Natural killer cell (primary cell): ENCODE measurements at regions of chr10 and their contacts with region 1.

Region 1: DNA sequence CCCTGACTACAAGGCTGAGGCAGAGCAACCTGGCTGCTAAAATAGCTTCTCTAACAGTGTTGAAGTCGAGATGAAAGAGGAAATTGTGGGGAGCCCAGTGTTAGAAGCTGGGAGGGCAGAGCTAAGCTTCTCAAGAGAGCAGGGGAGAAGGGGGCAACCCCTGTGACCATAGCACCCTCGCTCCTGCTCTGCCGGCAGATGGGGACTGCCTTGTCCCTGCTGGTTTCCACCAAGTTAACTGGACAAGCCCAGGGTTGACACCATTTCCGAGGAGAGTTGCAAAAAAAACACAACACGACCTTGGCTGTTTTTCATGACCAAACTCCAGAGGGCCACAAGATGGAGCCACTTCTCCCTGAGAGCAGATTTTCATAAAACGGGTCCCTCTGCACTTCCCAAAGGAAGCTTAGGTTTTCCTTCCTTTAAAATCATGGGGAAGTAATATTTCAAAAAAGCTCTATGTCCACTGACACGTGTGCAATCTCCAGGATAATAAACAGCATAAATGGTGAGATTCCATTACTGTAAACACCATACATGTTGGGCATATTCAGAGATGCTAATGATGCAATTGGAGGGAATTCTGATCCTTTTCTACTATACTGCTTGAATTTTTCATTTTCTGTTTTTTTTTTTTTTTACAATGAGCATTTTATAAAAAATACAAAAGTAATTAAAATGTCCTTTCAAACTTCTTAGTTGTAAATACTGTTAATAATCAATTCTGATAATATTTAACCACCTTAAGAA is 140.4 kb downstream of the PIP4K2A start:
- DNase-seq: peak; percentile 42 to 75
- ATAC-seq: peak; percentile 71 to 87 (median 81)
- H3K4me3 ChIP-seq: no peak overlapping the region
- H3K4me3 Mint-ChIP-seq: peak overlapping the region; percentile 82
- H3K27ac ChIP-seq: peak overlapping the region; percentile 71
- H3K27ac Mint-ChIP-seq: peak overlapping the region; percentile 62 to 79
- H3K4me1 ChIP-seq: peaks cover 34% of the 10 kb centered on the region
- H3K4me1 Mint-ChIP-seq: peaks cover 63 to 72% of the 10 kb centered on the region in 2 donors
- H3K27me3 ChIP-seq: no peaks in the 10 kb centered on the region
- H3K27me3 Mint-ChIP-seq: no peaks in the 10 kb centered on the region
- CTCF ChIP-seq: peak; percentile 71

Region 2: GRCh38 chr10:22436884-22437619 is 136.9 kb before region 1 on chr10:
- intact Hi-C with region 1: loop called (anchors 2 kb)
- DNase-seq: peak; percentile 86 to 95
- ATAC-seq: peak; percentile 80 to 93 (median 85)
- H3K4me3 ChIP-seq: peak overlapping the region; percentile 73
- H3K4me3 Mint-ChIP-seq: peak overlapping the region; percentile 95
- H3K27ac ChIP-seq: peak overlapping the region; percentile 98
- H3K27ac Mint-ChIP-seq: peak overlapping the region; percentile 97
- H3K4me1 ChIP-seq: peaks cover 23% of the 10 kb centered on the region
- H3K4me1 Mint-ChIP-seq: peaks cover 37 to 43% of the 10 kb centered on the region in 2 donors
- H3K27me3 ChIP-seq: peaks cover 2% of the 10 kb centered on the region
- H3K27me3 Mint-ChIP-seq: no peaks in the 10 kb centered on the region
- CTCF ChIP-seq: no peak

Region 3: DNA sequence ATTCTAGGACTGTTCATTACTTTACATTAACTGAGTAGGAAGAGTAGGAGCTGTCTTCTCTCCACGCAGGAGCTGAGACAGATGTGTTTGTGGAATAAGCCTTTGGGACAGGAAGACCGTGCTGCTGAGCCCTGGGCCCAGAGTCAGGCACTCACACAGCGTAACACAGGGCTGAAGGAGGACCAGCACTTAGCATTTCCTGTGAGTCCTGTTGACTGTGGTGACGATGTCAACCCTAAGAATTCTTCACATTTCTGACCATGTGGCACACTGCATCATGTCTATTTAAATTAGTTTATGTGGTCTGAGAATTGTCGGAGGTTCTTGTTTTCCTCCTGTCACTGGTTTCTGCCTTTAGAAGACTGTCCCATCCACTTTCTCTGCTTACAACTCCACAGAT is 23.1 kb after region 1 on chr10:
- intact Hi-C with region 1: loop called (anchors 2 kb)
- DNase-seq: peak; percentile 61 to 79
- ATAC-seq: peak; percentile 89 to 98 (median 97)
- H3K4me3 ChIP-seq: no peak overlapping the region
- H3K4me3 Mint-ChIP-seq: peak overlapping the region; percentile 85
- H3K27ac ChIP-seq: peak overlapping the region; percentile 79
- H3K27ac Mint-ChIP-seq: peak overlapping the region; percentile 99
- H3K4me1 ChIP-seq: peaks cover 76% of the 10 kb centered on the region
- H3K4me1 Mint-ChIP-seq: peaks cover 82 to 84% of the 10 kb centered on the region in 2 donors
- H3K27me3 ChIP-seq: no peaks in the 10 kb centered on the region
- H3K27me3 Mint-ChIP-seq: no peaks in the 10 kb centered on the region
- CTCF ChIP-seq: no peak

Region 4: DNA sequence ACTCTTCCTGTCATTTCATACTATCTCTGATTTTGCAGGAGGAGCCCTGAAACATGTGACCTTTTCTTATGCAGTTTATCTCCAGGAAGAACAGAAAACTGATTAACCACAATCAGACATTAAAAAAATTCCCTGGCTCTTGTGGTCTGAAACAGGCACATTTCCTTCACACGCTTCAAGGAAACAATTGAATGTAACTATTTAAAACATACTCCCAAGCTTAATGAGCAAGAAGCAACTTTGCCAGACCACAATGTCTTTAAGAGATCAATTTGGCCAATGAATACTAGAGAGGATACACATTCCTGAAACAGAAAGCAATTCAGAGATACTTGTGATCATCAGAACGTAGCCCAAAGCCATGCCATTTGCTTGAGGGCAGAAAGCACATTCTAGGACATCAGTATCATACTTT is 74.6 kb after region 1 on chr10:
- intact Hi-C with region 1: loop called (anchors 5 kb)
- DNase-seq: peak in 1 of 2 donors; percentile 56
- ATAC-seq: no peak
- H3K4me3 ChIP-seq: no peak overlapping the region
- H3K4me3 Mint-ChIP-seq: peak overlapping the region; percentile 86
- H3K27ac ChIP-seq: peak overlapping the region; percentile 91
- H3K27ac Mint-ChIP-seq: peak overlapping the region; percentile 97 to 99
- H3K4me1 ChIP-seq: peaks cover 86% of the 10 kb centered on the region
- H3K4me1 Mint-ChIP-seq: peaks cover 91 to 94% of the 10 kb centered on the region in 2 donors
- H3K27me3 ChIP-seq: no peaks in the 10 kb centered on the region
- H3K27me3 Mint-ChIP-seq: no peaks in the 10 kb centered on the region
- CTCF ChIP-seq: no peak

Region 5: GRCh38 chr10:22714479-22715289 is 140.7 kb after region 1 on chr10 and contains the start of gene PIP4K2A:
- intact Hi-C with region 1: loop called (anchors 2 kb)
- DNase-seq: peak; percentile 79 to 91
- ATAC-seq: peak; percentile 78 to 91 (median 88)
- H3K4me3 ChIP-seq: peak within 1 kb of the TSS; percentile 98
- H3K4me3 Mint-ChIP-seq: peak within 1 kb of the TSS; percentile 94
- H3K27ac ChIP-seq: peak within 1 kb of the TSS; percentile 94
- H3K27ac Mint-ChIP-seq: peak within 1 kb of the TSS; percentile 82 to 87
- H3K4me1 ChIP-seq: peaks cover 14% of the 10 kb centered on the region
- H3K4me1 Mint-ChIP-seq: peaks cover 34 to 35% of the 10 kb centered on the region in 2 donors
- H3K27me3 ChIP-seq: no peaks in the 10 kb centered on the region
- H3K27me3 Mint-ChIP-seq: no peaks in the 10 kb centered on the region
- CTCF ChIP-seq: no peak
- total RNA-seq, gene PIP4K2A: 311 to 423 (median 405) TPM

Region 6: DNA sequence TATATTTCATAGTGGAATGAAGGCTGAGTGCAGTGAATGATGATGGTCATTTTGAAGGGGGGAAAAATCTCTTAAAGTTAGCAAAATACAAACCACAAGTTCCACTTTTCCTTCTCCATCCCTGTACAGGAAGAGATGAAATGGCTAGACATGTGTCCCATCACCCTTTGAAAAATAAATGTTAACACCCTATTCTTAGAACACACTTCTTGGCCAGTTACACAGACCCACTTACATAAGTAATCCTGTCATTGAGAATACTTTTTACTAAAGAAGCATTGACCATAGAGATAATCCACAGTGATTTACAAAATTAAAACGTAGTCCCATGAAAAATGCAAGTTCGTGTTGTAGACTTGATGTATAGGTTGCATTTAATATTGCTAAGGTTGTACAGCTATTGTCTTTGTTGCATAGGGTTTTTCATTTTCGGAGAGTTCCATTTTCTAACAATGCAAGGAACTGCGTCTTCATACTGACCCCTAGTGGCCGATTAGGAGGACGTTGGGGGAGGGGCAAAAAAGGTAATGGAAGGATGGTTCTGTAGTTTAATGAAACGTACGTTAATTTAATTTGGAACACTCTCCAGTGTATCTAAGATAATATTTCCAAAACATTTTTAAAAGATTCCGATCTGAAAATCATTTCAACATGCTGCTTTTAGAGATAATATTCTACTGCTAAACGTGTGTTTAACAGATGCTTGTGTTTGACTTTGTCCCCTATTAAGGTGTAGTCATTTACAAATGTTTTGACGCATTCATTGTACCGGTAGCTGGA is 414.8 kb after region 1 on chr10:
- intact Hi-C with region 1: loop called (anchors 1 kb)
- DNase-seq: peak; percentile 48 to 89
- ATAC-seq: peak; percentile 87 to 95 (median 90)
- H3K4me3 ChIP-seq: no peak overlapping the region
- H3K4me3 Mint-ChIP-seq: no peak overlapping the region
- H3K27ac ChIP-seq: no peak overlapping the region
- H3K27ac Mint-ChIP-seq: no peak overlapping the region
- H3K4me1 ChIP-seq: no peaks in the 10 kb centered on the region
- H3K4me1 Mint-ChIP-seq: peaks cover 4 to 6% of the 10 kb centered on the region in 2 donors
- H3K27me3 ChIP-seq: no peaks in the 10 kb centered on the region
- H3K27me3 Mint-ChIP-seq: peaks cover 11 to 16% of the 10 kb centered on the region in 2 donors
- CTCF ChIP-seq: peak; percentile 90